ENCODE measurements at regions of chr5 and their contacts with region 1.

Region 1: DNA sequence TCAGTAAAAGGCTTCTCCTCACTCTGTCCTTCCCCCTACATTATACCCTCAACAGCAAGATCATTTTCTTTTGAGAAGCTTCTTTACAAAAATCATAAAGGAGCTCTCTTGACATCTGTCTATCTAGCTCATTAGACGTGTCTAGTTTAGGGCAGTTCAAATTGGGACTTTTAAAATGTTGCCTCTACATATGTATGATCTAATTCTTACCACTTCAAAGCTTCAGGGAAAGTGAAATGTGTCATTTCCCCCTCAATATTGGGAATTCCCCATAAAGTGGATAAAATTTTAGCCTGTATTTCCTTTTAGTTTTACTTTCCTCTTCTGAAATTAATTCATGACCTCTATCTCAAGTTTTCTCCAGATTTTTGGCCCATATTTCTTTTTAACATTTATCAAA is 323.7 kb downstream of the ARRDC3 start:
- DNase-seq: no peak
- H3K4me3 Mint-ChIP-seq: no peak overlapping the region
- H3K27ac Mint-ChIP-seq: no peak overlapping the region
- H3K4me1 Mint-ChIP-seq: peaks cover 28% of the 10 kb centered on the region
- H3K27me3 Mint-ChIP-seq: peaks cover 40% of the 10 kb centered on the region

Region 2: DNA sequence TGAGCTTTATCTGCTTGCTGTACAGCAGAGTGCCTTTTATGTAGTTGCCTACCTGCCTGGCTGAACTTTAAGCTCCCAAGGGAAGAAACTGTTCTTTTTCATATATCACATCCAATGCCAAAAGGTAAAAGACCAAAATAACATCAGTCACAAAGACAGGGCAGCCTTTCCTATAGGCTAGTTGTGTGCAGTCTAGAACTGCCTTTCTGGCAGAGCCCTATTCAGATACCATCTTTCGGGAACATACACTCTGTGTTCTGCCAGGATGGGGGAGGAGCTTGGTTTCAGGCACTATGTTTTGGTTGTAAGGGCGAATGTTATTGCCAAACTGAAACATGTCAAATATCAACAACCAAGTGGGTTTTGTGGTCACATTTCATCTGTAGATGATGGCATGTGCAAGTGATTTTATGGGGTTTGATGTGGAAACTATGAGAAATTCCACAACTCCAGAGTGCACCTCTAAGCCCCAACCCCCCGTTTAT is 186.3 kb before region 1 on chr5:
- CTCF ChIA-PET with region 1: no interaction called
- intact Hi-C with region 1: loop called (anchors 5 kb)
- DNase-seq: peak; percentile 54
- H3K4me3 Mint-ChIP-seq: no peak overlapping the region
- H3K27ac Mint-ChIP-seq: no peak overlapping the region
- H3K4me1 Mint-ChIP-seq: peaks cover 22% of the 10 kb centered on the region
- H3K27me3 Mint-ChIP-seq: peaks cover 23% of the 10 kb centered on the region

Region 3: GRCh38 chr5:90898330-90899013 is 160.9 kb before region 1 on chr5:
- CTCF ChIA-PET with region 1: no interaction called
- intact Hi-C with region 1: no loop called
- DNase-seq: no peak
- H3K4me3 Mint-ChIP-seq: no peak overlapping the region
- H3K27ac Mint-ChIP-seq: no peak overlapping the region
- H3K4me1 Mint-ChIP-seq: peaks cover 2% of the 10 kb centered on the region
- H3K27me3 Mint-ChIP-seq: peaks cover 3% of the 10 kb centered on the region

Region 4: DNA sequence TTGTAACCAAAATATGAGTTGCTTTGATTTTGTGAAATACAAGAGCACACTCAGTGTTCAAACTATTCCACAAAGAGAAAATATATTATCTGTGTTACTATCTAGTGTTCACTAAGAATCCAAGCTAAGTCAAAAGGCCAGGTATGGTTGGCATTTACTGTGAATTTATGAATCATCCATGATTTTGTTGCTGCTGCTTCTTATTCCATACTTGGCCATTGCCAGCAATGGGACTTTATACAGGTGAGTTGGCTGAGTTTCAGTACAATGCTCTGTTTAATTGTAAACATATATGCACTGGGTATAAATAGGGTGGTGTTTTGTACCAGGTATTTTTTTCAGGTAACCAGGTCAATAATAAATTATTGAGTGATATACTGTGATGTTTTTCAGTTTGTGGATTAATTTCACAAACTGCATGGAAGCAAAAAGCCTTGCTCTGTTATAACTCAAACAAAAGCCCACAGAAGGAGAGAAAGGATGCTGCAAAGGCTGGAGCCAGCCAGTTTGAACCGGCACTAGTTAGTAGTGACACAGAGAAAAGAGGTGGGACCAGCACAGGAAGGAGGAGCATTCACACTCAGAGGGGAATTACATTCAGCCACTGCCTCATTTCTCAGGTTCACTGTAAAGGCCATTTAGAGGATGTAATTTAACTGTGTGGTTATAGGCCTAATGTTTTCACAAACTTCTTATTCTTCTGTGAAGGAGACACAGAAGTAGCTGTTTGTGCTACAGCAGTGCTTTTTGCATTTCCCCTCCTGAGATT is 119.0 kb before region 1 on chr5:
- CTCF ChIA-PET with region 1: interaction called, 5 read pairs
- intact Hi-C with region 1: loop called (anchors 1 kb)
- DNase-seq: peak; percentile 88
- H3K4me3 Mint-ChIP-seq: no peak overlapping the region
- H3K27ac Mint-ChIP-seq: peak overlapping the region; percentile 73
- H3K4me1 Mint-ChIP-seq: peaks cover 13% of the 10 kb centered on the region
- H3K27me3 Mint-ChIP-seq: no peaks in the 10 kb centered on the region

Region 5: DNA sequence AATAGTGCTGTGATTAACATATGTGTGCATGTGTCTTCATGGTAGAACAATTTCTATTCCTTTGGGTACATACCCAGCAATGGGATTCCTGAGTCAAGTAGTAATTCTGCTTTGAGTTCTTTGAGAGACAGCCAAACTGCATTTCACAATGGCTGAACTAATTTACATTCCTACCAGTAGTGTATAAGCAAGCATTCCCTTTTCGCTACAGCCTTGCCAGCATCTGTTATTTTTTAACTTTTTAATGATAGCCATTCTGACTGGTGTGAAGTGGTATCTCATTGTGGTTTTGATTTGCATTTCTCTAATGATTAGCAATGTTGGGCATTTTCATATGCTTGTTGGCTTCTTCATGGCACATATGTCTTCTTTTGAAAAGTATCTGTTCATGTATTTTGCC is 15.2 kb after region 1 on chr5:
- CTCF ChIA-PET with region 1: interaction called, 3 read pairs
- intact Hi-C with region 1: loop called (anchors 1 kb)
- DNase-seq: no peak
- H3K4me3 Mint-ChIP-seq: no peak overlapping the region
- H3K27ac Mint-ChIP-seq: no peak overlapping the region
- H3K4me1 Mint-ChIP-seq: peaks cover 18% of the 10 kb centered on the region
- H3K27me3 Mint-ChIP-seq: peaks cover 20% of the 10 kb centered on the region

Region 6: DNA sequence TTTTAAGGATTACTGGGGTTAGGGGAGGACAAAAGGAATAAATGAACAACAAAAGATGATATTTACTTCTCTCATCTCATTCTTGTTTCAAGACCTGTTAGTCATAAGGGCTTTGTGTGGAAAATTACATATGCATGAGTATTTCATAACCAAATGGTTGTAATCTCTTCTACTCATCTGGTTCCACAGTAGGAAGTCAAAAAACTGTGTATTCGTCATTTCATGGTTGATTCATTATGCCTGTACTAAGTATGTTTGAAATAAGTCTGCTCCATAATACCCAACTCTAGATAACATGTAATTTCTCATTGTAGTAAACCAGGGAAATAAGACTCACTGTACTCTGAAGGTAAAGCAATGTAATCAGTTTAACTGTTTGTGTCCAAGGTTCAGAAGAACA is 110.9 kb after region 1 on chr5:
- CTCF ChIA-PET with region 1: interaction called, 3 read pairs
- intact Hi-C with region 1: loop called (anchors 1 kb)
- DNase-seq: no peak
- H3K4me3 Mint-ChIP-seq: no peak overlapping the region
- H3K27ac Mint-ChIP-seq: peak overlapping the region; percentile 16
- H3K4me1 Mint-ChIP-seq: peaks cover 18% of the 10 kb centered on the region
- H3K27me3 Mint-ChIP-seq: peaks cover 3% of the 10 kb centered on the region